ENCODE measurements at regions of chr2 and their contacts with region 1.

Region 1: DNA sequence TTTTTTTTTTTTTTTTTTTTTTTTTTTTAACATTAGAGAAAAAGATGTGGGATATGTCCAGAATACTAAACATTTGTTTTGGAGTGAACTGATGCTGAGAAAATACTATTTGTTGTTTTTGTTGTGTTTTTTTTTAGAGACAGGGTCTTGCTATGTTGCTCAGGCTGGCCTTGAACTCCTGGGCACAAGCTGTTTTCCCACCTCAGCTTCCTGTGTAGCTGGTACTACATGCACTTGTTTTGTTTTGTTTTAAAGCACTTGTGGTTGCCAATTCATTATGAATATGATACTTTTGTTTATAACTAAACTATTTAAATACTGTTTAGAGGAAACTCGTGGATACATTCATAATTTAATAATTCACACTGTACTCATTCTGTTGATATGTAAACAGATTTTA is 33.4 kb upstream of the DYSF start:
- DNase-seq: no peak
- ATAC-seq: no peak
- H3K4me3 ChIP-seq: no peak overlapping the region
- H3K27ac ChIP-seq: no peak overlapping the region
- H3K4me1 ChIP-seq: peaks cover 22% of the 10 kb centered on the region; the same call in 2 of the 3 replicates
- CTCF ChIP-seq: no peak
- EP300 ChIP-seq: no peak
- POLR2A ChIP-seq: no peak
- RAD21 ChIP-seq: no peak

Region 2: GRCh38 chr2:71291398-71291797 is 128.6 kb before region 1 on chr2:
- CTCF ChIA-PET with region 1: no interaction called
- POLR2A ChIA-PET with region 1: no interaction called
- DNase-seq: no peak
- ATAC-seq: no peak
- H3K4me3 ChIP-seq: no peak overlapping the region
- H3K27ac ChIP-seq: no peak overlapping the region
- H3K4me1 ChIP-seq: no peaks in the 10 kb centered on the region
- CTCF ChIP-seq: no peak
- EP300 ChIP-seq: no peak
- POLR2A ChIP-seq: no peak
- RAD21 ChIP-seq: no peak

Region 3: GRCh38 chr2:71402417-71402816 is 17.6 kb before region 1 on chr2:
- CTCF ChIA-PET with region 1: no interaction called
- POLR2A ChIA-PET with region 1: interaction called, 10 read pairs
- DNase-seq: no peak
- ATAC-seq: no peak
- H3K4me3 ChIP-seq: no peak overlapping the region
- H3K27ac ChIP-seq: no peak overlapping the region
- H3K4me1 ChIP-seq: no peaks in the 10 kb centered on the region
- CTCF ChIP-seq: no peak
- EP300 ChIP-seq: no peak
- POLR2A ChIP-seq: no peak
- RAD21 ChIP-seq: no peak

Measured in A549 (cell line).